ENCODE measurements at regions of chr18 and their contacts with region 1.

Region 1: DNA sequence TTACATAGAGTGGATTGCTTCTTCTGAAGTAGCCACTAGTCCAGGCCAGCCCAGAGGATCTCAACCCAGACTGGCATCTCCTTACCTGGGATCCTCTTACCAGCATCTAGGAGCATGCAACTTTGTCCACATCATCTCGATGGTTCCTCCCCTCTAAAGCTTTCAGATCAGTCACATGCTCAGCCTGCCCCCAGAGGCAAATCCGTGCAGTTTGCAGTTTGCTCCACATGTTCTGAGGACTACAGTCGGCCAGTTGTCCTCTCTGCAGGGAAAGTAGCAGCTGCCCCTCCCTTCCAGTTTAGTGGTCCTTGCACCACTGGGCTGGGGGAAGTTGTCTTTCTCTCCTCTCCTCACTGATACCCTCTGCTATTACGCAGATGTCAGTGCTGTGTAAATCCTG is 259.8 kb upstream of the APCDD1 start:
- DNase-seq: no peak
- ATAC-seq: peak; percentile 71
- H3K4me3 ChIP-seq: no peak overlapping the region
- H3K27ac ChIP-seq: no peak overlapping the region
- H3K4me1 ChIP-seq: no peaks in the 10 kb centered on the region
- H3K27me3 ChIP-seq: peaks cover 4 to 21% of the 10 kb centered on the region in 2 experiments; a peak in 1 of 5 replicates
- CTCF ChIP-seq: peak in 2 of 3 experiments; percentile 9 to 19; a peak in 1 of 6 replicates
- EP300 ChIP-seq: no peak
- POLR2A ChIP-seq: no peak
- RAD21 ChIP-seq: peak in 1 of 2 experiments; percentile 11; a peak in 1 of 4 replicates

Region 2: DNA sequence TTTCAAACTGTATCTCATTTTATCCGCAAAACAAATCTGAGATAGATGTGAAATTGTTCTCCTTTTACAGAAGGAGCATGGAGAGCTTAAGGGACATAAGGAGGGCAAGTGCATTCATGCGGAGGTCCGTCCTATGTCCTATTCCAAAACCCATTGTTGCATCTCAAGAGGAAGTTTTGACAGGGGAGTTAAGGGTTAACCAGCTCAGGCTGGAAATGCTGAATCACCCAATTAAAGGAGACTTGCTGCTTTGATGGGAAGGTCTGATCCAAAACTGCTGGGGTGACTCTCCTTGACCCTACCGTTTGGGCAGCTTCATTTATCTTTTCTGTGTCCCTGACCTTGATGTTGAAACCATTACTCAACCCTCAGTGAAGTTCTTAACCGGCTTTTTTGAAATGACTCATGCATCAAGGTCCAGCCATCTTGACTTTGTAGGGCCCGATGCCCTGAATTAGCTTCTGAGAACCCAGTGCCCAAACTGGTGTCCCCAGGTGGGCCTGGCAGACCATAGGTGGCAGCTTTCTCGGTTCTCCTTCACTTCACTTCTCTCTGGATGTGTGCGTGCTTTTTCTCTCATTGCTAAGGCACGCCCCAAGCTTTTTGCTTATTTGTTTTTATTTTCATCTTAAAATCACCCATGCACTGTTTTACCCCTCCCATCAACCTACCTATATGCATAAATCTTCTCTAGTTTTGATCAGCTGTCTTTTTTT is 324.7 kb before region 1 on chr18:
- CTCF ChIA-PET with region 1: no interaction called
- POLR2A ChIA-PET with region 1: no interaction called
- in situ Hi-C with region 1: no loop called
- intact Hi-C with region 1: no loop called
- DNase-seq: peak; percentile 83 to 97 (median 89)
- ATAC-seq: peak; percentile 89
- H3K4me3 ChIP-seq: no peak overlapping the region
- H3K27ac ChIP-seq: peak overlapping the region; percentile 92
- H3K4me1 ChIP-seq: peaks cover 23 to 67% of the 10 kb centered on the region in 2 experiments
- H3K27me3 ChIP-seq: no peaks in the 10 kb centered on the region
- CTCF ChIP-seq: no peak
- EP300 ChIP-seq: peak; percentile 99
- POLR2A ChIP-seq: peak; percentile 42; the same call in 1 of the 2 replicates
- RAD21 ChIP-seq: peak in 1 of 2 experiments; percentile 47; a peak in 3 of 4 replicates

Region 3: GRCh38 chr18:10694835-10695435 is 500.3 kb after region 1 on chr18:
- CTCF ChIA-PET with region 1: no interaction called
- POLR2A ChIA-PET with region 1: no interaction called
- in situ Hi-C with region 1: no loop called
- intact Hi-C with region 1: loop called (anchors 5 kb)
- DNase-seq: no peak
- ATAC-seq: no peak
- H3K4me3 ChIP-seq: no peak overlapping the region
- H3K27ac ChIP-seq: no peak overlapping the region
- H3K4me1 ChIP-seq: no peaks in the 10 kb centered on the region
- H3K27me3 ChIP-seq: peaks cover 40 to 45% of the 10 kb centered on the region in 2 experiments
- CTCF ChIP-seq: no peak
- EP300 ChIP-seq: no peak
- POLR2A ChIP-seq: no peak
- RAD21 ChIP-seq: no peak

Measured in K562 (cell line).